Sigmoid colon (tissue), 7 donors: ENCODE measurements at regions of chr5 and their contacts with region 1.

Region 1: GRCh38 chr5:80141147-80141671 is 106.1 kb downstream of the THBS4 start:
- DNase-seq: peak; percentile 98
- H3K4me3 ChIP-seq: no peak overlapping the region
- H3K27ac ChIP-seq: peak overlapping the region; percentile 69 to 91 (median 88)
- H3K4me1 ChIP-seq: peaks cover 0 to 38% (median 29%) of the 10 kb centered on the region in 4 donors
- H3K27me3 ChIP-seq: no peaks in the 10 kb centered on the region
- CTCF ChIP-seq: no peak
- EP300 ChIP-seq: peak; percentile 18 to 87 (median 46)
- POLR2A ChIP-seq: no peak

Region 2: GRCh38 chr5:80109646-80110478 is 31.3 kb before region 1 on chr5:
- intact Hi-C with region 1: loop called (anchors 2 kb)
- DNase-seq: peak; percentile 93
- H3K4me3 ChIP-seq: peak overlapping the region in 3 of 4 donors; percentile 4 to 15 (median 14)
- H3K27ac ChIP-seq: peak overlapping the region in 3 of 4 donors; percentile 77 to 85 (median 77)
- H3K4me1 ChIP-seq: peaks cover 0 to 28% (median 19%) of the 10 kb centered on the region in 4 donors
- H3K27me3 ChIP-seq: no peaks in the 10 kb centered on the region
- CTCF ChIP-seq: no peak
- EP300 ChIP-seq: peak in 2 of 4 donors; percentile 2 to 59
- POLR2A ChIP-seq: no peak

Region 3: GRCh38 chr5:80125962-80126480 is 15.2 kb before region 1 on chr5:
- intact Hi-C with region 1: no loop called
- DNase-seq: no peak
- H3K4me3 ChIP-seq: no peak overlapping the region
- H3K27ac ChIP-seq: peak overlapping the region in 1 of 4 donors; percentile 59
- H3K4me1 ChIP-seq: no peaks in the 10 kb centered on the region
- H3K27me3 ChIP-seq: no peaks in the 10 kb centered on the region
- CTCF ChIP-seq: no peak
- EP300 ChIP-seq: peak in 2 of 4 donors; percentile 26 to 46
- POLR2A ChIP-seq: no peak

Region 4: DNA sequence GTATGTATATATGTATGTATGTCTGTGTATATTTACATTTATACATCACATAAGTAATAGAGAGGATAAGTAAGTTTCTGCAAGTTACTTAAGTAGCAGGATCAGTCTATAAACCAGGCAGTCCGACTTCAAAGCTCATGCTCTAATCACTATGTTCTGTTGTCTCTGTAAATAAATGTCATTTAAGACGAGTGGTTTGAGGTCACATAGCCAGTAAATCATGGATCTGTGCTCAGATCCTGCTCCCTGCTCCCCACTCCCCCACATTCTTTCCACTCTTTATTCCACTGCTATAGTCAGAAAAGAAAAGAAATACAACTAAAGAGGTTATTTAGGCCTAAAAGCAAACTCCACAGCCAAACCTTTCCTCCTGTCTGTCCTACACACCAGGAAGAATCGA is 24.2 kb after region 1 on chr5:
- intact Hi-C with region 1: no loop called
- DNase-seq: no peak
- H3K4me3 ChIP-seq: no peak overlapping the region
- H3K27ac ChIP-seq: no peak overlapping the region
- H3K4me1 ChIP-seq: peaks cover 0 to 9% (median 3%) of the 10 kb centered on the region in 4 donors
- H3K27me3 ChIP-seq: no peaks in the 10 kb centered on the region
- CTCF ChIP-seq: no peak
- EP300 ChIP-seq: no peak
- POLR2A ChIP-seq: no peak

Region 5: DNA sequence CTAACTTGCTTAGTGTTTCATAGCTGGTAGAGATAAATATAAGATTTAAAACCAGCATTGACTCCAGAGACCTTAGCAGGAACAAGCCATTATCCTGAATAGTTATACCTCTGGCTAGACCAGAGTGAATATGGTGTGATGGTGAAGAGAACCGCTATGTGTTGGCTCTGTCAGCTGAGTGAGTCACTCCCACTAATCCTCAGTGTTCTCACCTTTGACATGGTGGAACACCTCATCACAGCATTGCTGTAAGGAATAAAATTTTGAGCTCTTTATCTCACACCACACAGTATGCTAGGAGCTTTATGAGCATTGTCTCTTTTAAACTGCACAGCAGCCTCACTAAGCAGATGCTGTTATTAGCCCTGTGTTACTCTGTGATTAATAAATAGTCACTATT is 604.3 kb after region 1 on chr5:
- intact Hi-C with region 1: no loop called
- DNase-seq: no peak
- H3K4me3 ChIP-seq: no peak overlapping the region
- H3K27ac ChIP-seq: no peak overlapping the region
- H3K4me1 ChIP-seq: no peaks in the 10 kb centered on the region
- H3K27me3 ChIP-seq: no peaks in the 10 kb centered on the region
- CTCF ChIP-seq: no peak
- EP300 ChIP-seq: no peak
- POLR2A ChIP-seq: no peak